ENCODE measurements at regions of chr19 and their contacts with region 1.

Region 1: DNA sequence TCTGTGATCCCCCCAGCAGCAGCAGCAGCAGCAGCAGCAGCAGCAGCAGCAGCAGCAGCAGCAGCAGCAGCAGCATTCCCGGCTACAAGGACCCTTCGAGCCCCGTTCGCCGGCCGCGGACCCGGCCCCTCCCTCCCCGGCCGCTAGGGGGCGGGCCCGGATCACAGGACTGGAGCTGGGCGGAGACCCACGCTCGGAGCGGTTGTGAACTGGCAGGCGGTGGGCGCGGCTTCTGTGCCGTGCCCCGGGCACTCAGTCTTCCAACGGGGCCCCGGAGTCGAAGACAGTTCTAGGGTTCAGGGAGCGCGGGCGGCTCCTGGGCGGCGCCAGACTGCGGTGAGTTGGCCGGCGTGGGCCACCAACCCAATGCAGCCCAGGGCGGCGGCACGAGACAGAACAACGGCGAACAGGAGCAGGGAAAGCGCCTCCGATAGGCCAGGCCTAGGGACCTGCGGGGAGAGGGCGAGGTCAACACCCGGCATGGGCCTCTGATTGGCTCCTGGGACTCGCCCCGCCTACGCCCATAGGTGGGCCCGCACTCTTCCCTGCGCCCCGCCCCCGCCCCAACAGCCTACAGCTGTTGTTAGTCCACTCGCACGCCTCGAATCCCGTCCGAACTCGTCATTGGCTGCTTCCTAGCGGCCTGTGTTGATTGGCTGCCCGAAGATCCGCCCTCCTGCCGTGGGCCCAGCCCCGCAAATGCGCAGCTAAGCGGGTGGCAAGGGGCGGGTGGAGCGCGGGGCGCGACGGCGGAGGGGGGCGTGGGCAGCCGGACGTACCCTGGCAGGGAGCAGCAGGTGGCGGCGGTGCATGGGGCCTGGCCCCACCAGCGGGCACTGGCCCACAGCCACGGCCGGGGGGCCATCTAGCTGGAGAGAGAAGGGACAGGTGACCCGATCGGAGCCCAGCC is 1.4 kb upstream of the SIX5 start:
- H3K4me3 Mint-ChIP-seq: peak overlapping the region; percentile 90
- H3K27ac Mint-ChIP-seq: peak overlapping the region; percentile 88
- H3K4me1 Mint-ChIP-seq: peaks cover 46% of the 10 kb centered on the region
- H3K27me3 Mint-ChIP-seq: peaks cover 90% of the 10 kb centered on the region

Region 2: DNA sequence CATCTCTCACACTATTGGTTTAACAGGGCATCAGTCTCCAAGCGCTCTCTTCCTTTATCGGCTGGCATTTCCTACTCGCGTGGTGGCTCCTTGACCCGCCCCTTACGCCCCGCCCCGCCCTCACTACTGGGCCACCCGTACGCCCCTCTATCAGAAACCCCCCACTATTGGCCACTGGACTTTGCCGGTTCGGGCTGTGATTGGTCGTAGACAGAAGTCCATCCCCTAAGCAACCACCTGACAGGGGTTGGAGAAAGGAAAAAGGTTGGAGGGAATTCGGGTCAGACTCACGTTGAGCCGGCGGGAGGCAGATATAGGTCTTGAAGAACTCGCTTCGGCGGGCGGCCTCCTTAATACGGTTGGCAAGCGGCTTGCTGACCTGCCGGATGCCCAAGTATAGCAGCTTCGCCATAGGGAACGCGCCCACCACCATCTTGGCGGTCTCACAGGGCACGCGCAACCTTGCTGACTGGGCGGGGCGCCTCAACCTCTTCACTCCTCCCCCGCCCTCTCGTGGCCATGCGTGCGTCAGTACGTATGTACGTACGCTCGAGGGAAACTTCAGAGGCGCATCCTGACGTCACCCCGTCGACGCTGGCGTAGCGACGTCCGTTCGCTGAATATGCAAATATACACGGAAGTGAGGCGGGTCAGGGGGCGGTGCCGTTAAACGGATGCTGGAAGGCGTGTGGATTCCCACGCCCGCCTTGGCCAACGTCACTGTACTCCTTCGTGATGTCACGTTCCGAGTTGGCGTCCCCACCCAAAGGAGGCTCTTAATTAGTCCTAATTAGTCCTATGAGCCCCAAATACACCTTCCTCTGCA is 185.9 kb before region 1 on chr19 and contains the start of gene OPA3:
- intact Hi-C with region 1: no loop called
- H3K4me3 Mint-ChIP-seq: peak within 1 kb of the TSS; percentile 86
- H3K27ac Mint-ChIP-seq: peak within 1 kb of the TSS; percentile 98
- H3K4me1 Mint-ChIP-seq: peaks cover 11% of the 10 kb centered on the region
- H3K27me3 Mint-ChIP-seq: peaks cover 13% of the 10 kb centered on the region

Region 3: GRCh38 chr19:45798995-45799517 is 28.6 kb after region 1 on chr19:
- intact Hi-C with region 1: loop called (anchors 1 kb)
- H3K4me3 Mint-ChIP-seq: no peak overlapping the region
- H3K27ac Mint-ChIP-seq: no peak overlapping the region
- H3K4me1 Mint-ChIP-seq: peaks cover 35% of the 10 kb centered on the region
- H3K27me3 Mint-ChIP-seq: peaks cover 94% of the 10 kb centered on the region

Measured in dendritic cell treated with granulocyte-macrophage colony-stimulating factor and Interleukin-4, amounts not matched to agents 40 ng/mL and 50 ng/mL, for 4 days (primary cell).